ENCODE measurements at regions of chr9 and their contacts with region 1.

Region 1: GRCh38 chr9:93095205-93096130 is 549 bp upstream of the CARD19 start:
- DNase-seq: peak; percentile 98 to 100
- H3K4me3 ChIP-seq: peak overlapping the region; percentile 56 to 81
- H3K27ac ChIP-seq: peak overlapping the region; percentile 88 to 97
- H3K4me1 ChIP-seq: peaks cover 22 to 37% of the 10 kb centered on the region in 2 donors
- H3K27me3 ChIP-seq: no peaks in the 10 kb centered on the region
- CTCF ChIP-seq: peak in 1 of 3 experiments; percentile 4

Region 2: DNA sequence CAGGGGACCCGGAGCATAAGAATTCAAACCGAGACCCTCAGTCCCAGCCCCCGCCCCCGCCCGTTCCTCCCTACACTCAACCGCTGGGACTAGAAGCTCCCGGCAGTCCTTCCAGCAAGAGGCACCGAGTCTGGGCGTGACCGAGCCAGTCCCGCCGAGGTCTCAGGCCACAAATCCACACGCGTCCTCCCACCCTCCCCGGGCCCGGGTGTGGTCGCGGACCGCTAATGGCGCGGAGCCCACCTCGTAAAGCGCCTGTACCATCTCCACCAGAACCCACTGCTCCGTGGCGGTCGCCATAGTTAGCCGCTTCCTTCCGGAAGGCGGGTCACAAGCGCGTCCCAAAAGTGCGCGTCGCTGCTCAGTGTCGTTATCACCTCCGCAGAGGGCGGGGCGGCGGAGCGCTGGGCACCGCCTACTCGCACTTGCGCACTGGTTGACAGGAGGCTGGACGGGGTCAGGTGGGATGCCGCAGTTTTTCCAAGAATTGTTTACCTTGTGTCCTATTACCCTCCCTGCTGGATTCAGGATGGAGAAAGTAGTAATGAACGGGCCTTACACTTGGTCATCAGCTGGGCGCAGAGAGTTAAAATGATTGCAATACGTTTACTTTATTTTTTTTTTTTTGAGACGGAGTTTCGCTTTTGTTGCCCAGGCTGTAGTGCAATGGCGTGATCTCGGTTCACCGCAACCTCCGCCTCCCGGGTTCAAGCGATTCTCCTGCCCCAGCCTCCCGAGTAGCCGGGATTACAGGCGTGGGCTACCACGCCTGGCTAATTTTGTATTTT is 980.2 kb before region 1 on chr9 and contains the start of gene SPTLC1:
- intact Hi-C with region 1: loop called (anchors 10 kb)
- DNase-seq: peak; percentile 79 to 96
- H3K4me3 ChIP-seq: peak within 1 kb of the TSS; percentile 83 to 88
- H3K27ac ChIP-seq: peak within 1 kb of the TSS; percentile 82 to 88
- H3K4me1 ChIP-seq: peaks cover 3 to 6% of the 10 kb centered on the region in 2 donors
- H3K27me3 ChIP-seq: no peaks in the 10 kb centered on the region
- CTCF ChIP-seq: no peak
- total RNA-seq, gene SPTLC1: 48.0 TPM

Region 3: GRCh38 chr9:93051680-93052089 is 43.8 kb before region 1 on chr9:
- intact Hi-C with region 1: loop called (anchors 1 kb)
- DNase-seq: peak; percentile 40 to 89
- H3K4me3 ChIP-seq: no peak overlapping the region
- H3K27ac ChIP-seq: peak overlapping the region; percentile 90 to 92
- H3K4me1 ChIP-seq: peaks cover 13 to 47% of the 10 kb centered on the region in 2 donors
- H3K27me3 ChIP-seq: no peaks in the 10 kb centered on the region
- CTCF ChIP-seq: no peak

Region 4: GRCh38 chr9:93119953-93120845 is 24.7 kb after region 1 on chr9:
- intact Hi-C with region 1: loop called (anchors 2 kb)
- DNase-seq: peak; percentile 90 to 98
- H3K4me3 ChIP-seq: peak overlapping the region in 1 of 2 donors; percentile 1
- H3K27ac ChIP-seq: peak overlapping the region; percentile 67 to 72
- H3K4me1 ChIP-seq: peaks cover 0 to 22% of the 10 kb centered on the region in 2 donors
- H3K27me3 ChIP-seq: no peaks in the 10 kb centered on the region
- CTCF ChIP-seq: peak; percentile 51 to 52 (median 51)

Region 5: DNA sequence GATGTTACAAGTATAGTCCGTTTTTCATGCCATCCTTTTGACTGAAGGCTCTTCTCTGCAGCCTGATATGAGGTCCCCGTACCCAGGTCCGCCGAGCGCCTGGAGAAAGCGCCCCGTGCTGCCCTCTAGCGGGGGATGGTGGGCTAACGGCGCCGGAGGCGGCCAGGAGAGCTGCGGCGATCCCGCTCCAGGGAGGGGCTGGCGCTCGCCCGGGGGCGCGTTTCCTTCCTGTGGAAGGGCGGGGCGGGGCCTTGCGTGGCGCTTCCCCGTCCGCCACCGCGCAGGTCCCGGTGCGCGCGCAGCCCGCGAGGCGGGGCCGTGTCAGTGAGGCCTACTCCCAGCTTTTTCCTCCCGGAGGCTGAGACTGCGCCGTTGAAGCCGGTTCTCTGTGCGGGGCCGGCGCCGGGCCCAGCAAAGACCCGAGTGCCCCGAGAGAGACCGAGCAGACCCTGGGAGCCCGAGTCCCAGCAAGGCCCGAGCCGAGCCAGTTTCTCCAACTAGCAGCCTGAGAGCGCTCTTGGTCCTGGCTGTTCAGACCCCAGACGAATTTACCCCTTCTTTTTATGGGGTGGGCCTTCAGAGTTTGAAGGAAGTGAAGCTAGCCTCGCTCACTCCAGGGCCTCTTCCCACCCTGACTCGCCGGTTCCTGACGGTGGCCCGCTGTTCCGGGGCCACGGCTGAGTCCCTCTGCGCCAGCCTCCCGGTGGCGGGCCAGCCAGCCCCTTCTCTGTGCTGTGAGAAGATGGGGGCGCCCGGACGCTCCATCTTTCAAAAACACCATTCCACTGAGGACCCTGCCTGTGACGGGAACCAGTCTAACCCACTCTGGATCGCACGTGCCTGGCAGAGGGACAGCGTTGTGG is 471.2 kb after region 1 on chr9:
- intact Hi-C with region 1: loop called (anchors 5 kb)
- DNase-seq: peak; percentile 86 to 99
- H3K4me3 ChIP-seq: peak overlapping the region; percentile 69 to 91
- H3K27ac ChIP-seq: peak overlapping the region; percentile 93 to 99
- H3K4me1 ChIP-seq: peaks cover 6 to 10% of the 10 kb centered on the region in 2 donors
- H3K27me3 ChIP-seq: no peaks in the 10 kb centered on the region
- CTCF ChIP-seq: peak; percentile 92 to 98 (median 96)

Measured in ascending aorta (tissue), 2 donors.